Activated CD4-positive, alpha-beta T cell treated with anti-CD3 and anti-CD28 coated beads, Interleukin-2, amount 10 ng/mL, durations not matched to agents 24 days and 14 days (primary cell): ENCODE measurements at regions of chr5 and their contacts with region 1.

Region 1: DNA sequence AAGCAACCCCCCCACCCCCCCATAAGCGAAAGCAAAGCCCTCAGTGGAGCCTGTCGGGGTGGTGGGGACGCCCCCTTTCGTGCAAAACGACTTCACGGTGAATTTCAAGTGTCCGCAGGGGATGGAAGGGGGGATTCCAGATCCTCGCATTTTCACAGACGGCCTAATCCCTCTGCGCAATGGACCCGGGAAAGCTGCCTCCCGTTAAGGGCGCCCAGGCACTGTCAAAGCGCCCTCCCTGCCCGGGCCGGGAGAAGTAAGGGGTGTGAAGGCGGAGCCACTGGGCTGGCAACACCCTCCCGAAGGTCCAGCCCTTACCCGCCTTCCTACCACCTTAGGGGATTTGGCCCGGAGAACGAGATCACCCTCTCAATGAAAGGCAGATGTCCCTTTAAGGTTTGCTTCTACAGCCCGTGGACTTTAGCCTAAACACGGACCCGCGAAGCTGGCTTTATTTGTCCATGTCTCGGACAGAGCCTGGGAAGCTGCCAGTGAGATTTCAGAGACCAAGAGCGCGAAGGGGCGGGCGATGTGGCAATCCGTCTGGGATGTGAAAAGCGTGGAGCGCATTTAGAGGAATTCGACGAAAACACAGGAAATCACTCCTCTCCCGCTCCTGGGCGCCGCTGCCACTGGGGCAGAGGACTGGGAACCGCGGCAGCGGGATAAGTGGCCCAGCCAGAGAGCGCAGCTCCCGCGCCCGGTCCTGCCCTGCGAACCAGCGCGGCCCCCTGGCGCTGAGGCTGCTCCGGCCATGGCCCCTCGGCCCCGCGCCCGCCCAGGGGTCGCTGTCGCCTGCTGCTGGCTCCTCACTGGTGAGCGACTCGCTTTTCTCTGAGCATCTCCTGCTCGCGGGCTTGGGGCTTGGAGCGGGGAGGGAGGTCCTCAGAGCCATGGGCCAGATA is at the starts of genes ITGA1 and PELO:
- DNase-seq: peak; percentile 85
- H3K4me3 Mint-ChIP-seq: peak within 1 kb of the TSS; percentile 91
- H3K27ac Mint-ChIP-seq: peak within 1 kb of the TSS; percentile 73
- H3K4me1 Mint-ChIP-seq: peaks cover 30% of the 10 kb centered on the region
- H3K27me3 Mint-ChIP-seq: peaks cover 30% of the 10 kb centered on the region
- total RNA-seq, gene ITGA1: 1.6 and 2.2 TPM in 2 replicates
- total RNA-seq, gene PELO: 20.0 and 21.2 TPM in 2 replicates

Region 2: DNA sequence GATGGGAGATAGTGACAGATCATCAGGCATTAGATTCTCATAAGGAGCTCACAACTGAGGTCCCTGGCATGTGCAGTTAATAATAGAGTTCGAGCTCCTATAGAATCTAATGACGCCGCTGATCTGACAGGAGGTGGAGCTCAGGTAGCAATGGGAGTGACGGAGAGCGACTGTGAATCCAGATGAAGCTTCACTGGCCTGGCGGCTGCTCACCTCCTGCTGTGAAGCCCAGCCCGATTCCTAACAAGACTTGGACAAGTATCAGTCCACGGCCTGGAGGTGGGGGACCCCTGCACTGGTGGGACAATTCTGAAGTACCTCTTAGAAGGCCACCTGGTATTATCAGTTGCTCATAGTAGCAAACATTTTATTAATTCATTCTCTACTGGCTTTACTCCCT is 378.0 kb before region 1 on chr5:
- intact Hi-C with region 1: no loop called
- DNase-seq: no peak
- H3K4me3 Mint-ChIP-seq: no peak overlapping the region
- H3K27ac Mint-ChIP-seq: no peak overlapping the region
- H3K4me1 Mint-ChIP-seq: no peaks in the 10 kb centered on the region
- H3K27me3 Mint-ChIP-seq: no peaks in the 10 kb centered on the region

Region 3: DNA sequence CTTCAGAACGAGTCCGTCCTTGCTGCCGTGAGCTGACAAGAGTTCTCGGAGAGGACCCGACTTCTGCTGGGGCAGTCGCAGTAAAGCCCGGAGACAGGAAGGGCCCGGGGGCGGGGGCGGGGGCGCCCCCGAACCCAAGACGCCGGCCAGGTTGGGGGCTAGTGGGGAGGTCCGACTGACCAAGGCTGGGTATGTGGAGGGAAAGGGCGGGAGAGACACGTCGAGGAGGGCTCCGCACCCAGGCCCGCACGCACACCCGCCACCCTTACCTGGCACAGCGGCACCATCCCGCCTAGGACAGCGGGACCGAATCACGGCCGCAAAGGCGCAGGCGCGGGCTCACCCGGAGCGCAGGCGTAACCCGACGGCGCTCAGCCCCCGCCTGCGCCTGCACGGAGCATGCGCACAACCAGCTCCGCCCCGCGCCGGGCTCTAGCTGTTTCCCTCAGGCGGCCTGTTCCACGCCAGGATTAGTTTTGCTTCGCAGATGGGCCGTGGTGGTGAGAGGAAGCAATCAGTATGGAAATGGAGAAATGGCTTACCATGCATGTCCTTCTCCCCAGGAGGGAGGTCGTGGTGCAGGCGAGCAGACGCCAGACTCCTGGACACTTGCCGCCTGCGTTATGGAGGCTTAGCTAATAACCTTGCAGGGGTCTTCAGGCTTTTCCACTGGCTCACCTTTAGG is 321.7 kb after region 1 on chr5 and contains the start of gene MOCS2:
- intact Hi-C with region 1: loop called (anchors 5 kb)
- DNase-seq: peak; percentile 98
- H3K4me3 Mint-ChIP-seq: peak within 1 kb of the TSS; percentile 91
- H3K27ac Mint-ChIP-seq: peak within 1 kb of the TSS; percentile 89
- H3K4me1 Mint-ChIP-seq: peaks cover 31% of the 10 kb centered on the region
- H3K27me3 Mint-ChIP-seq: no peaks in the 10 kb centered on the region
- total RNA-seq, gene MOCS2: 16.5 and 18.4 TPM in 2 replicates